ENCODE measurements at regions of chr3 and their contacts with region 1.

Region 1: GRCh38 chr3:187745201-187746058 is at the start of gene BCL6:
- DNase-seq: peak; percentile 73 to 93 (median 88)
- H3K4me3 ChIP-seq: peak within 1 kb of the TSS; percentile 98
- H3K4me3 Mint-ChIP-seq: peak within 1 kb of the TSS; percentile 91 to 99 (median 98)
- H3K27ac ChIP-seq: peak within 1 kb of the TSS; percentile 98
- H3K27ac Mint-ChIP-seq: peak within 1 kb of the TSS; percentile 99 to 100 (median 99)
- H3K4me1 ChIP-seq: peaks cover 48% of the 10 kb centered on the region
- H3K4me1 Mint-ChIP-seq: peaks cover 51 to 69% (median 68%) of the 10 kb centered on the region in 3 donors
- H3K27me3 ChIP-seq: no peaks in the 10 kb centered on the region
- H3K27me3 Mint-ChIP-seq: no peaks in the 10 kb centered on the region
- total RNA-seq, gene BCL6: 17.1 to 17.2 TPM

Region 2: GRCh38 chr3:187974871-187975271 is 229.4 kb after region 1 on chr3:
- CTCF ChIA-PET with region 1: interaction called, 39 read pairs
- POLR2A ChIA-PET with region 1: no interaction called
- DNase-seq: peak in 2 of 5 donors; percentile 20 to 46
- H3K4me3 ChIP-seq: peak overlapping the region; percentile 29
- H3K4me3 Mint-ChIP-seq: peak overlapping the region; percentile 40 to 78 (median 65)
- H3K27ac ChIP-seq: no peak overlapping the region
- H3K27ac Mint-ChIP-seq: peak overlapping the region; percentile 75 to 95 (median 92)
- H3K4me1 ChIP-seq: peaks cover 46% of the 10 kb centered on the region
- H3K4me1 Mint-ChIP-seq: peaks cover 53 to 56% (median 54%) of the 10 kb centered on the region in 3 donors
- H3K27me3 ChIP-seq: no peaks in the 10 kb centered on the region
- H3K27me3 Mint-ChIP-seq: no peaks in the 10 kb centered on the region

Region 3: DNA sequence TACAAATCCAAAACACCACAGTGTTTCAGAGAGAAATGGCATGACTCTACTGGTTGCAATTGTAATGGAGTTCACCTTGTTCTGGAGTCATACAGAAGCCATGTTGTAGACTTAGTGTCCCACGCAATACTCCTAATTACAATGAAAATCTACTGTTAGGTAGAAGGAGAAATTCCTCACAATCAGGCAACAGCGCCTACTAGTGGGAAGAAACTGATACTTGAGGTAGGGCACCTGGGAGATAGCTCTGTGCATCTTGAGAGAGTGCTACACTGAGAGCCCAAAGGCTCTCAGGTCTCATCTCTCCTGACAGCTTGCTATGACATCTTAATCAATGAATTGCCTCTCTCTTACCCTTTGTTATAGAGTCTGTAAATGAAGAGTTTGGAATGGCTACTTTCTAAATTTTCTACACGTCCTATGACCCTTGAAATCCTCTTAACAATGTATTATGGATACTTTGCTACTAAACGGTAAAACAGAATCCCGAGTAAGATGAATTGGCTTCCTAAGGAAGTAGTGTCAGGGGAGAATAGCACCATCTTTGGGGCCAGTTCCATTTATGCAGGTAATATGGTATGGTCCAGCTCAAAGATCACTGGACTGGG is 1003.7 kb after region 1 on chr3:
- CTCF ChIA-PET with region 1: interaction called, 178 read pairs
- POLR2A ChIA-PET with region 1: interaction called, 9 read pairs
- DNase-seq: peak; percentile 35 to 64 (median 45)
- H3K4me3 ChIP-seq: no peak overlapping the region
- H3K4me3 Mint-ChIP-seq: no peak overlapping the region
- H3K27ac ChIP-seq: no peak overlapping the region
- H3K27ac Mint-ChIP-seq: no peak overlapping the region
- H3K4me1 ChIP-seq: no peaks in the 10 kb centered on the region
- H3K4me1 Mint-ChIP-seq: peaks cover 0 to 13% (median 3%) of the 10 kb centered on the region in 3 donors
- H3K27me3 ChIP-seq: no peaks in the 10 kb centered on the region
- H3K27me3 Mint-ChIP-seq: no peaks in the 10 kb centered on the region

Region 4: GRCh38 chr3:188954590-188955208 is 1209.3 kb after region 1 on chr3:
- CTCF ChIA-PET with region 1: interaction called, 298 read pairs
- POLR2A ChIA-PET with region 1: interaction called, 41 read pairs
- DNase-seq: peak; percentile 54 to 77 (median 56)
- H3K4me3 ChIP-seq: no peak overlapping the region
- H3K4me3 Mint-ChIP-seq: no peak overlapping the region
- H3K27ac ChIP-seq: no peak overlapping the region
- H3K27ac Mint-ChIP-seq: peak overlapping the region in 1 of 8 donors; percentile 42
- H3K4me1 ChIP-seq: no peaks in the 10 kb centered on the region
- H3K4me1 Mint-ChIP-seq: no peaks in the 10 kb centered on the region
- H3K27me3 ChIP-seq: no peaks in the 10 kb centered on the region
- H3K27me3 Mint-ChIP-seq: no peaks in the 10 kb centered on the region